Activated CD4-positive, alpha-beta T cell treated with anti-CD3 and anti-CD28 coated beads, Interleukin-2, amount 10 ng/mL, durations not matched to agents 24 days and 14 days (primary cell): ENCODE measurements at regions of chr4 and their contacts with region 1.

Region 1: DNA sequence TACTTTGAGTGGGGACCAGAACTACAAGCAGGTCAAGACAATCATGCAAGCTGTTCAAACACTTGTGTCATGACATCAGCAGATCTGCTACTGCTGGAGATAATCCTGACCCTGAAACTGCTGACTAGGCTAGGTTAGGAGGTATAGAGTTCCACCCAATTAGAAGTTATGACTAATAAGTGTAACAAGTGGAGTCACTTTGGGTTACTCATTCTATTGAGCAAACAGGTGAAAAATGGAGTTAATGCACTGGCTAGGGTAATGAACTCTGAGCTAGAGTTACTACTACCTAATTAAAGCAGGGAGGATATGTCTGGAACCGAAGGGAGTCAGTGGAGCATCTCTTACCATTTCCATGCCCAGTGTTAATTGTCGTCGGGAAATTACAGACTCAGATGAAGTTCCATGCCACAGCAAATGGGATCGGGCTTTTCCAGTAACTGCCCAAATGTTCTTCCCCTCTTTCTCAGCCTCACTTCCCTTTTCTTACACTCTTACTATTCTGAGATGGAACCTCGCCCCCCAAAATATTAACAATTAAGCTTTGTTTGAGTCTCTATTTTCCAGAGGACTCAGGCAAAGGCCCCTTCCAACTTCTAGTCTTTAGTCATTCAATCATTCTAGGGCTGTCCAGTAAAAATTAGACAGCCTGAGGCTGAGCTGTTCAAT is 19.8 kb upstream of the MANBA start:
- DNase-seq: peak; percentile 31
- H3K4me3 Mint-ChIP-seq: no peak overlapping the region
- H3K27ac Mint-ChIP-seq: no peak overlapping the region
- H3K4me1 Mint-ChIP-seq: no peaks in the 10 kb centered on the region
- H3K27me3 Mint-ChIP-seq: peaks cover 4% of the 10 kb centered on the region

Region 2: DNA sequence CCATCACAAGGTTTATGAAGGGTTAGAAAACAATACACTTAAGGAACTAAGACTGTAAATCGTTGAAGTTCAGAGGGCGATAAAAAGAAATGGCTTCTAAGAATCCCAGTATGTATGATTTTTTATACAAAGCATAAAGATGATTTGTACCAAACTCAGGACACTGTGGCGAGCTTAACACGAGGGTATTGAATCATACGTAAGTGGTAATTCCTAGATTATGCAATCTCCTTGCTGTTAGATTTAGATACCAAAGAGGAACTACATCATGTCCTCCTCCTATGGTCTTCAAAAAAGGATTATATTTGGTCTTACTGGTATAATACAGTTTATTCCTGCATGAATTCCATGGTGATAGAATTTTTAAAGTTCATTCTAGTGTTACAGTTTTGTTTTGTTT is 255.5 kb before region 1 on chr4:
- intact Hi-C with region 1: loop called (anchors 10 kb)
- DNase-seq: no peak
- H3K4me3 Mint-ChIP-seq: peak overlapping the region; percentile 44
- H3K27ac Mint-ChIP-seq: peak overlapping the region; percentile 42
- H3K4me1 Mint-ChIP-seq: peaks cover 78% of the 10 kb centered on the region
- H3K27me3 Mint-ChIP-seq: no peaks in the 10 kb centered on the region

Region 3: DNA sequence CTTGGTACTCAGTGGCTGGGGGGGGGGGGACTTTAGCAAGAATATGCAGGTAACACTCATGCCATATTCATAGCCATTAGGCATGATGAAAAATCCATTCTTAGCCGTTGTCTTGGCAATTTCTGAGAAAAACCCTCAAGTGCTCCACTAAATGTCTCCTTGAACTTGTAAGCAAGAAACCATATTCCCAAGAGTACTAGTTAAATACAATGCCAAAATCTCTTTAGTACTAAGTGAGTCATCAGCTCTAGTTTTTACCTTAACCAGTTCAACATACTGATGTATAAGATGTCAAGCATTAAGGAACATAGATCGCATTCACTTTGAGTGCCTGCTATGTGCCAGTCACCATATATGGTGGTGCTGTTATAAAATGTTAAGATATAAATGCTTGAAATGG is 19.2 kb after region 1 on chr4:
- intact Hi-C with region 1: no loop called
- DNase-seq: peak; percentile 23
- H3K4me3 Mint-ChIP-seq: no peak overlapping the region
- H3K27ac Mint-ChIP-seq: no peak overlapping the region
- H3K4me1 Mint-ChIP-seq: peaks cover 7% of the 10 kb centered on the region
- H3K27me3 Mint-ChIP-seq: no peaks in the 10 kb centered on the region